Dendritic cell treated with granulocyte-macrophage colony-stimulating factor and Interleukin-4, amounts not matched to agents 40 ng/mL and 50 ng/mL, for 4 days (primary cell): ENCODE measurements at regions of chr6 and their contacts with region 1.

Region 1: GRCh38 chr6:134174672-134175198 is 122.3 kb upstream of the SLC2A12 start:
- H3K4me3 Mint-ChIP-seq: peak overlapping the region; percentile 96
- H3K27ac Mint-ChIP-seq: peak overlapping the region; percentile 98
- H3K4me1 Mint-ChIP-seq: peaks cover 66% of the 10 kb centered on the region
- H3K27me3 Mint-ChIP-seq: no peaks in the 10 kb centered on the region

Region 2: DNA sequence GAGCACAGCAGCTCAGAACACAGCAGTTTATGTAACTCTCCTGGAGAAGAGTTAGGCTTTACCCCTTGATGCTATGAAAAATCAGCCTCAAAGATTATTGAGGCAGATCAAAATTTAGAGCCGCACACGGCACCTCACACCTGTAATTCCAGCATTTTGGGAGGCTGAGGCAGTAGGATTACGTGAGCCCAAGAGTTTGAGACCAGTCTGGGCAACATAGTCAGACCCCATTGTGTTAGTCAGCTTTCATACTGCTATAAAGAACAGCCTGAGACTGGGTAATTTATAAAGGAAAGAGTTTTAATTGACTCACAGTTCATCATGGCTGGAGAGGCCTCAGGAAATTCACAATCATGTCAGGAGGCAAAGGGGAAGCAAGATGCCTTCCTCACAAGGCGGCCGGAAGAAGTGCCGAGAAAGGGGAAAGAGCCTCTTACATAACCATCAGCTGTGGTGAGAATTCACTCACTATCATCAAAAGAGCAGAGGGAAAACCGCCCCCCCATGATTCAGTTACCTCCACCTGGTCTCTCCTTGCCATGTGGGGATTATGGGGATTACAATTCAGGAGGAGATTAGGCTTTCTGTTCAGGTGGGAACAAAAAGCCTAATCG is 55.5 kb after region 1 on chr6:
- intact Hi-C with region 1: loop called (anchors 5 kb)
- H3K4me3 Mint-ChIP-seq: no peak overlapping the region
- H3K27ac Mint-ChIP-seq: no peak overlapping the region
- H3K4me1 Mint-ChIP-seq: peaks cover 20% of the 10 kb centered on the region
- H3K27me3 Mint-ChIP-seq: no peaks in the 10 kb centered on the region

Region 3: GRCh38 chr6:134373282-134373922 is 198.7 kb after region 1 on chr6:
- intact Hi-C with region 1: loop called (anchors 10 kb)
- H3K4me3 Mint-ChIP-seq: peak overlapping the region; percentile 55
- H3K27ac Mint-ChIP-seq: peak overlapping the region; percentile 93
- H3K4me1 Mint-ChIP-seq: peaks cover 66% of the 10 kb centered on the region
- H3K27me3 Mint-ChIP-seq: no peaks in the 10 kb centered on the region

Region 4: DNA sequence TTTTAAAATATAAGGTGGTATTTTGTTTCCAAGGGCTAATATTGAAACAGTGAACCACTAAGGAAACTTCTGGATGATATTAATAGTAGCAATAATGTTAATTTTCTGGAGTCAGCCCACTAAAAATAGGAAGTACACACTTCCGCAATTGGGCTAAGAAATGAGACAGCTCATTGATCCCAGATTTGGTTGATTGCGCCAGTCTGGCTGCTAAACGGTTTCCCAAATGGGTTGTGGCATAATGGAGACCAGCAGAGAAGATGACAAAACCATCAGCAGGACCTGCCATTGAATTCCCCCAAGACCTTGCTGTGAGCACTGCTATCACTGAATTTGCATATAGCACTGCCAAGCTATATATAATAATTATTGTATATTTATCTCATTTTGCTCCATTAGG is 214.4 kb after region 1 on chr6:
- intact Hi-C with region 1: no loop called
- H3K4me3 Mint-ChIP-seq: no peak overlapping the region
- H3K27ac Mint-ChIP-seq: peak overlapping the region; percentile 25
- H3K4me1 Mint-ChIP-seq: peaks cover 19% of the 10 kb centered on the region
- H3K27me3 Mint-ChIP-seq: no peaks in the 10 kb centered on the region

Region 5: DNA sequence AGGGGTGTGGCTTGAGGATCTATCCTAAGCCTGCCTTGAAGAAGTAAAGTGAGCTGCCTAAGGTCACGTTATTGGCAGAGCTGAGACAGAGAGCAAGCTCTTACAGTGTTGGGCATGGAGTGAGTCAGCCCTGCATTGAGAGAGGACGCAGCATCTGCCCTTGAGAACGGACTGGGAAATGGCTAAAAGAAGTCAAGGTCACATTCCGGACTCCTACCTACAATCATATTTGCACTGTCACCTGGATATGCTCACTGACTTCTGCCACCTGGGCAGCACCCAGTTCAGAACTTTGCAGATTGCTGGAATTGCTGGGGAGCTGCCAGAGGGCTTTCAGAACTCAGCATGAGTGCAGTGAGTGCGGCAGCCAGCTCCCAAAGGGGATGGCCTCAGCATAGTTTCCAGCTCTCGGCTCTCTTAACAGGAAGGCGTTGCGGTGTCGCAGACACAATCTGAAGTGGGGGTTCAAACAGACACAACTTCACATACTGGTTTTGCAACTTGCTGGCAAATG is 342.5 kb after region 1 on chr6:
- intact Hi-C with region 1: loop called (anchors 10 kb)
- H3K4me3 Mint-ChIP-seq: no peak overlapping the region
- H3K27ac Mint-ChIP-seq: peak overlapping the region; percentile 79
- H3K4me1 Mint-ChIP-seq: peaks cover 46% of the 10 kb centered on the region
- H3K27me3 Mint-ChIP-seq: no peaks in the 10 kb centered on the region

Region 6: DNA sequence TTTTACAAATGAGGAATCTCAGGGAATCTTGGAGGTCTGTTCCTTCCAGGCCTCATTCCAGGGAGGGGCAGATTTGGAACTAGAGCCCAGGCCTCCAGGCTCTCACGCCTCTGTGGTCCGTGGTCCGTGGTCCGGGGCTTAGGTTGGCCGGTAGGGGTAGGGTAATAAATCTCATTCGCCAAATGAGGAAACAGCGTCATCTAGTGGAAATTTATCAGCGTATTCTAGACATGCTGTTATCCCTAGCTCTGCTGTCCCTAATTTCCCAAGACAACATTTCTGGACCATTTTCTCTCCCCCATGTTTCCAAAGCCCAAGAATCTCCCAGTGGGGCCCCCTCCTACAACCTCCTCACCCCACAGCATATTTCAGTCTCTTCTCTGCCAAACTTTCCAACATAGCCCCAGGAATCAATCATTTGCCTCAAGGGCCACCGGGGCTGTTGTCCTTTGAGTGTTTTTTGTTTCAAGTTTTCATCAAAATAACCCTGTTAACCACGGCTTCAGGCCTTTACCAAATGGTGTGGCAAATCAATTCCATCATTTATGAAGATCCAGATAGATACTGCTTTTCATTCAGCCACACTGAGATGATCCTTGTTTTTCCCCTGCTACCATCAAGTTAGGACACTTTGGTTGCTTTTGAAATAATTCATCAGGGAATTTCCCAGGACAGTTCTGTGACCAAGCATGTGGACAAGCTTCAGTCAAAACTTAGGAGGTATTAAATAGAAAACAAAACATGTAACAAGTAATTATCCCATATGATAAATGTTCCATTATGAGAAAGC is 648.4 kb after region 1 on chr6:
- intact Hi-C with region 1: loop called (anchors 1 kb)
- H3K4me3 Mint-ChIP-seq: peak overlapping the region; percentile 25
- H3K27ac Mint-ChIP-seq: peak overlapping the region; percentile 61
- H3K4me1 Mint-ChIP-seq: peaks cover 20% of the 10 kb centered on the region
- H3K27me3 Mint-ChIP-seq: peaks cover 2% of the 10 kb centered on the region